Cardiac septum (tissue), 1 donor: ENCODE measurements at regions of chrX and their contacts with region 1.

Region 1: DNA sequence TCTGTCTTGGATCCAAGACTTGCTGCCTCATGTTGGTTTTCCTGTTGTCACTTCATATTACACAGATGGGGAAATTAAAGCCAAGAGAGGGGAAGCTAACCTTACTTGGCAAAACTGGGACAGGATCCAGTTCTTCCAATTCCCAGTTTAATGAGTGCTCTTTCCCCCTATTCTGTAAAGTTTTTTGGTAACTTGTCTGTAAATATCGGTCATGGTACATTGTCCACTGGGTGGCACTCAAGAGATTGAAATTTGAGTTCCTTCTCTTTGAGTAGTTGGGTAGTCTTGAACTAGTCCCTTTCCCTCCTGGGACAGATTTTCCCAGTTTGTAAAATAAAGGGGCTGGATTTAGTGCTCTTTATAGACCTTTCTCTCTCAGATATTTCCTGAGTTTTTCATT is 12.4 kb upstream of the EOLA2 start:
- DNase-seq: no peak

Region 2: GRCh38 chrX:150715184-150715583 is 764.5 kb after region 1 on chrX:
- intact Hi-C with region 1: loop called (anchors 10 kb)
- DNase-seq: no peak